ENCODE measurements at regions of chr7 and their contacts with region 1.

Region 1: GRCh38 chr7:17769918-17770317 is 170.4 kb downstream of the SNX13 start:
- DNase-seq: peak; percentile 63
- H3K4me3 ChIP-seq: no peak overlapping the region
- H3K27ac ChIP-seq: no peak overlapping the region
- H3K4me1 ChIP-seq: peaks cover 0 to 31% (median 6%) of the 10 kb centered on the region in 6 donors
- H3K27me3 ChIP-seq: no peaks in the 10 kb centered on the region
- CTCF ChIP-seq: peak in 10 of 11 experiments; percentile 26 to 76 (median 56)
- POLR2A ChIP-seq: no peak

Region 2: GRCh38 chr7:17830206-17830605 is 60.3 kb after region 1 on chr7:
- intact Hi-C with region 1: no loop called
- DNase-seq: no peak
- H3K4me3 ChIP-seq: no peak overlapping the region
- H3K27ac ChIP-seq: no peak overlapping the region
- H3K4me1 ChIP-seq: no peaks in the 10 kb centered on the region
- H3K27me3 ChIP-seq: no peaks in the 10 kb centered on the region
- CTCF ChIP-seq: no peak
- POLR2A ChIP-seq: no peak

Region 3: DNA sequence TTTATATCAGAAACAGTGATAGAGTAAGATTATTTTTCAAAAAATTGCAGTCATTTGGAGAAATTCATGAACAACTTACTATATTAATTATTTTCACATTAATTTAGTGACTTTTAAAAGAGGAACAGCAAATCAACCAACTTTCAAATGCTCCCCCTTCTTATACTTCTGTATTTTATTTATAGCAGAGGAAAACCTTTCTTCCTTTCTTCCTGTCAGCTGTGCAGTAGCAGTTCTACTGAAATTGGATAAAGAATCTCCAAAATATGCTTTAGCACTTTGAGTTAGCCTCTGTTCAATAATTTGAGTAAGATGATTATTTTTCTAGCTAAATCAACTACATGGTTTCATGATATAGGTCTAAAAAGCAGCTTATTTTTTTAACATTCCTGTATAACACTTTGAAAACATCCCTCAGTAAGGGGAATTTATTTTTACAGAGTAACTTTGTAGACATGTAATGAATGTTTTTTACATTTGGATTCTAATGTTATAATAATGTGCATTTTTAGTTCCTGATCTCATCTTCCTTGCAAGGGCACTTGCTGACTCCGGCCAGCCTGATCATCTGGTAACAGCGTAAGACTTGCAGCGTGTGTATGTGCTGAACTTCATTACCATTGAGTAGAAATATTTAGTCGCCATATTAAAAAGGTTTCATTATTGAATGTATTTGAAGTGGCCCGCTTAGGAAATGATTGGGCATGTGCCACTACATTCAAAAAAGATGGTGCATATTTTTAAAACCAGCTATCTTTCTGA is 567.3 kb after region 1 on chr7:
- intact Hi-C with region 1: loop called (anchors 10 kb)
- DNase-seq: peak; percentile 57
- H3K4me3 ChIP-seq: peak overlapping the region in 2 of 8 donors; percentile 4 to 30
- H3K27ac ChIP-seq: peak overlapping the region in 6 of 8 donors; percentile 12 to 50 (median 28)
- H3K4me1 ChIP-seq: peaks cover 10 to 65% (median 34%) of the 10 kb centered on the region in 6 donors
- H3K27me3 ChIP-seq: no peaks in the 10 kb centered on the region
- CTCF ChIP-seq: no peak
- POLR2A ChIP-seq: no peak